Posterior vena cava (tissue), 2 donors: ENCODE measurements at regions of chr5 and their contacts with region 1.

Region 1: DNA sequence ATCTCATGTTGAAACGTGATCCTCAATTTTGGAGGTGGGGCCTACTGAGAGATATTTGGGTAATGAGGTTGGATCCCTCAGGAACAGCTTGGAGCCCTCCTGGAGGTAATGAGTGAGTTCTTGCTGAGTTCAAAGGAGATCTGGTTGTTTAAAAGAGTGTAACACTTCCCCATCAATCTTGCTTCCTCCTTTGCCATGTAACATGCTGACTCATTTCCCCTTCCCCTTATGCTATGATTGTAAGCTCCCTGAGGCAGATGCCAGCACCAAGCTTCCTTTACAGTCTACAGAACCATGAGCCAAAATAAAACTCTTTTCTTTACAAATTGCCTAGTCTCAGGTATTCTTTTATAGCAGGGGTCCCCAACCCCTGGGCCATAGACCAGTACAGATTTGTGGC is 352.3 kb downstream of the SLCO4C1 start:
- DNase-seq: no peak

Region 2: GRCh38 chr5:101894985-101895384 is 48.8 kb before region 1 on chr5:
- intact Hi-C with region 1: loop called in 1 of 2 experiments (anchors 2 kb)
- DNase-seq: no peak